ENCODE measurements at regions of chr12 and their contacts with region 1.

Region 1: GRCh38 chr12:56571126-56571525 is 49.5 kb downstream of the RBMS2 start:
- DNase-seq: no peak
- ATAC-seq: no peak
- H3K4me3 ChIP-seq: no peak overlapping the region
- H3K4me3 Mint-ChIP-seq: no peak overlapping the region
- H3K27ac ChIP-seq: no peak overlapping the region
- H3K27ac Mint-ChIP-seq: no peak overlapping the region
- H3K4me1 ChIP-seq: peaks cover 0 to 6% of the 10 kb centered on the region in 2 donors
- H3K4me1 Mint-ChIP-seq: peaks cover 3% of the 10 kb centered on the region
- H3K27me3 ChIP-seq: no peaks in the 10 kb centered on the region
- H3K27me3 Mint-ChIP-seq: peaks cover 4% of the 10 kb centered on the region
- CTCF ChIP-seq: no peak

Region 2: DNA sequence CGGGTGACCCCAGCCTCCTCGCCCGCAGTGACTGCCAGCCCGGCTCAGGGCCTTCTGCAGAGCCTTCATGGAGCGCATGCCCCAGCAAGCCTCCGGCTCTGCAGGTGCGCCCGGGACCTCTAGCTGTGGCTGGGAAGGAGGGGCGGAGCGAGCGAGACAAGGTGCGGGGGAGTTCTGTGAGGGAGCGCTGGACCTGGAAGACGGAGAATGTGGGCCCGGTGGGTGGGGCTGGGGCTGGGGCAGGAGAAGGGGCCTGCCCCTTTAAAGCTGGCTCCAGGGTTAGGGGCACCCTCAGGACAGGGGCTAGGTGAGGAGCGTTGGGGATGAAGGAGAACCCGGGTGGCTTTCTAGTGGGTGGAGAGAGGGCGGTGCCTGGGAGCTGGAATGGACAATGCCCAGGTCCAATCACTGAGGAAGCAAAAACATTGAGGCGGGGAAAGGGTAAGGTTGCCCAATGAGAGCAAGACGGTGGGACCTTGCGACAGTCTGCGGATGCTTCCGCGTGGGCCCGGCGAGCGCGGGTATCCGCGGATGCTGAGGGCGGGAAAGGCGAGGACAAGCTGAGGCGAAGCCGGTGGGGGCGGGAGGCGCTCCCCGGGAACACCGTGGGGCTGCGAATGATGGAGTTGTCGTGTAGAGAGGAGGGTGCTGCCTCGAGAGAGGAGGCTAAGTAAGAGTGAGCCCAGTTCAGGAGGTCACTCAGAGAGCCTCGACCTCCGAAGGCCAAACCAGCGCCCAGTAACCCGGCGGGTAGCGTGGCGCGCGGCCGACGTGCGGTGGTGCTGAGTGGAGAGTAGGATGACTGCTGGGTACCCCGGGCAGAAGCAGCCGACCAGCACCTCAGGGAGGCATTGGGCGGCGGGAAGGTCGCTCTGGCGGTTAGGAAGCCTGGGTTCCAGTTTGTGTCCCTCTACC is 82.8 kb before region 1 on chr12 and contains the start of gene GLS2:
- CTCF ChIA-PET with region 1: no interaction called
- POLR2A ChIA-PET with region 1: no interaction called
- intact Hi-C with region 1: loop called (anchors 1 kb)
- DNase-seq: peak; percentile 85
- ATAC-seq: peak; percentile 99
- H3K4me3 ChIP-seq: peak within 1 kb of the TSS; percentile 26 to 79 (median 73)
- H3K4me3 Mint-ChIP-seq: peak within 1 kb of the TSS; percentile 91
- H3K27ac ChIP-seq: no peak within 1 kb of the TSS
- H3K27ac Mint-ChIP-seq: peak within 1 kb of the TSS; percentile 80
- H3K4me1 ChIP-seq: peaks cover 0 to 19% of the 10 kb centered on the region in 2 donors
- H3K4me1 Mint-ChIP-seq: peaks cover 19% of the 10 kb centered on the region
- H3K27me3 ChIP-seq: peaks cover 0 to 9% (median 5%) of the 10 kb centered on the region in 4 experiments
- H3K27me3 Mint-ChIP-seq: peaks cover 17% of the 10 kb centered on the region
- CTCF ChIP-seq: no peak
- total RNA-seq, gene GLS2: 5.3 and 7.2 TPM in 2 replicates

Region 3: GRCh38 chr12:56510786-56511185 is 60.3 kb before region 1 on chr12:
- CTCF ChIA-PET with region 1: interaction called, 46 read pairs
- POLR2A ChIA-PET with region 1: no interaction called
- intact Hi-C with region 1: loop called (anchors 1 kb)
- DNase-seq: no peak
- ATAC-seq: no peak
- H3K4me3 ChIP-seq: no peak overlapping the region
- H3K4me3 Mint-ChIP-seq: no peak overlapping the region
- H3K27ac ChIP-seq: no peak overlapping the region
- H3K27ac Mint-ChIP-seq: no peak overlapping the region
- H3K4me1 ChIP-seq: peaks cover 0 to 2% of the 10 kb centered on the region in 2 donors
- H3K4me1 Mint-ChIP-seq: peaks cover 2% of the 10 kb centered on the region
- H3K27me3 ChIP-seq: no peaks in the 10 kb centered on the region
- H3K27me3 Mint-ChIP-seq: peaks cover 13% of the 10 kb centered on the region
- CTCF ChIP-seq: no peak

Measured in B cell (primary cell).